CD4-positive, alpha-beta memory T cell (primary cell): ENCODE measurements at regions of chr11 and their contacts with region 1.

Region 1: DNA sequence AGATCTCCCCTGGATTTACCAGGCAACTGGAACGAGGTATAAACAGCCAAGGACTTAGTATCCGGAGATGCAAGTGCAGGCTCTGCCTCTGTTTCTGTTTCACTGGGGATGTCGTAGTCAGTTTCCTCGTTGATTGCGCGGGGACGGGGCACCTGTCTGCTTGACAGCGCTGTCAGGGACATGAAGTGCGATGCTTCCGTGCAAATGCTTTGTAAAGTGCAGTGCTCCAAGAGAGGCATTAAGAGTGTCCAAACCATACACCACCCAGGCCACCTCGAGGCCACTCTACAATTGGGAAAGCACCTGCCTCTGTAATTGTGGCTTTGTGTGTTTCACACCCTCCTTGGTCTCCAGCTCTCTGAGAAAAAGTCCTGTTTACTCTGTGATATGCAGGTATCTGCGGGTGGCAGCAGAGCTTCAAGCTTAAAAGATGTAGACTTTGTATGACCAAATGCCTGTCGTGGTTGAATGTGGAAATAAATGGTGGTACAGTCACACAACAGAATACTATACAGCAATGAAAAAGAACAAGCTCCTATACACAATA is 18.6 kb upstream of the CD5 start:
- DNase-seq: peak; percentile 80 to 91 (median 82)
- H3K4me3 ChIP-seq: peak overlapping the region in 1 of 2 donors; percentile 19
- H3K4me3 Mint-ChIP-seq: peak overlapping the region; percentile 75 to 90 (median 86)
- H3K27ac ChIP-seq: peak overlapping the region; percentile 91
- H3K27ac Mint-ChIP-seq: peak overlapping the region; percentile 94 to 100 (median 99)
- H3K4me1 ChIP-seq: peaks cover 55% of the 10 kb centered on the region
- H3K4me1 Mint-ChIP-seq: peaks cover 42 to 65% (median 50%) of the 10 kb centered on the region in 4 donors
- H3K27me3 ChIP-seq: no peaks in the 10 kb centered on the region
- H3K27me3 Mint-ChIP-seq: no peaks in the 10 kb centered on the region

Region 2: GRCh38 chr11:60970369-60970774 is 113.3 kb before region 1 on chr11:
- CTCF ChIA-PET with region 1: interaction called, 4 read pairs
- POLR2A ChIA-PET with region 1: interaction called, 3 read pairs
- intact Hi-C with region 1: loop called (anchors 2 kb)
- DNase-seq: peak; percentile 78 to 82 (median 80)
- H3K4me3 ChIP-seq: peak overlapping the region; percentile 38 to 92
- H3K4me3 Mint-ChIP-seq: peak overlapping the region; percentile 93 to 98 (median 96)
- H3K27ac ChIP-seq: peak overlapping the region; percentile 92
- H3K27ac Mint-ChIP-seq: peak overlapping the region; percentile 88 to 98 (median 96)
- H3K4me1 ChIP-seq: peaks cover 23% of the 10 kb centered on the region
- H3K4me1 Mint-ChIP-seq: peaks cover 18 to 38% (median 24%) of the 10 kb centered on the region in 4 donors
- H3K27me3 ChIP-seq: no peaks in the 10 kb centered on the region
- H3K27me3 Mint-ChIP-seq: peaks cover 0 to 1% of the 10 kb centered on the region in 2 donors

Region 3: DNA sequence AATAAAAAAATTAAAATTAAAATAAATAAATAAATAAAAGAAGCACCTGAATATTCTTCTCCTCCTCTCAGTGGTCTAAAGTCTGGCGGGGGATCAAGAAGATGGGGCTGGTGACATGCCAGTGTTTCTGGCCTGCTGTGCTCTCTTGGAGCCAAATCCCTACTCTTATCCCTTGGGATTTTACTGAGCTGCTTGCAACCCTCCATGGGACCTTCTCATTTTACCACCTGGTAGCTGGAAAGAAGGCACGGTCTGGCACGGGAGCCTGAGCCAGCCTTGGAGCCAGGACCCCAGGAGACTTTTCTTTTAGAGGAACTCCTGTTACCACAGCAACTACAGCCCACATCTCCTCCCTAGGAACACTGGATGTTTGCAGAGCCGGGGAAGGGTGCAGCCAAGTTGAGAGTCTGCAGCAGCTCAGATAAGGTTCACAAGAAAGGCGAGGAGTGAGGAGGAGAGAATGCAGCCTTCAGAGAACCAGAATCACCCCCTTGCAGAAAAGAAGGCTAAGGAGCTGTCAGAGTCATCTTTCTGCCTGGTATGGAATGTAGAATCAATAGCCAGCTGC is 90.7 kb before region 1 on chr11:
- CTCF ChIA-PET with region 1: no interaction called
- POLR2A ChIA-PET with region 1: interaction called, 157 read pairs
- intact Hi-C with region 1: no loop called
- DNase-seq: peak in 1 of 5 donors; percentile 7
- H3K4me3 ChIP-seq: no peak overlapping the region
- H3K4me3 Mint-ChIP-seq: peak overlapping the region; percentile 34 to 81 (median 78)
- H3K27ac ChIP-seq: peak overlapping the region; percentile 51
- H3K27ac Mint-ChIP-seq: peak overlapping the region; percentile 84 to 96 (median 94)
- H3K4me1 ChIP-seq: peaks cover 92% of the 10 kb centered on the region
- H3K4me1 Mint-ChIP-seq: peaks cover 53 to 86% (median 72%) of the 10 kb centered on the region in 4 donors
- H3K27me3 ChIP-seq: no peaks in the 10 kb centered on the region
- H3K27me3 Mint-ChIP-seq: no peaks in the 10 kb centered on the region

Region 4: DNA sequence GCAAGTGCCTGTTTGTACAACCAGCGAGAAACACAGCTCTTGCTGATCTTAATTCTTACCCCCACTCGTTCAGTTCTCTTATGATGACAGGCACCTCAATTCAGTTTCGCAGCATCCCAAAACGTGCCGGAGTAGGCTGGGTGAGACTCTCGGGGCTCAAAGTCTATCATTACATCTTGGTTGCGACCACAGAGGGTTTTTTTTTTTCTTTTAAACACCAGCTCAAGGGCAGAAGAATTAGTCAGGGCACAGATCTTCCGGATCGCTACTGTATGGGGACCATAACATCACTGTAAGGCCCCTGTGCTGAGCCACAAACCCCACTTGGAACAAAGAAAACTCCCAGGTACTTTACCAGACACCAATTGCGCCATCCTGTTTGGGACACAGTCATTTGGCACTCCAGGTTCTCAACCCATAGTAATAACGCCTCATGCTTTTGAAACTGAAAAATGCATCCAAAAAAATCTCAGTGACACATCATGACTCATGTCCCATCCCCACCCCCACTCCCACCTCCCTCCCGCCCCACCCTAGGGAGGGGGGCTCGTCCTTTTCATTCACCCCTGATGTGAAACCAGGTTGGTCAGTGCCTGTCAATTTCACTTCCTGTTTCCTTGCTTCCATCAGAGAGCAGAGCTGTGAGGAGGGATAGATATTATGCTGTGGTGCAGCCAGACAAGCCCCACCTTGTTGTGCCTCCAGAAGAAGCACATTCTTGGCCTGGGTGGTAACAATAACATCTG is 22.4 kb before region 1 on chr11:
- CTCF ChIA-PET with region 1: interaction called, 6 read pairs
- POLR2A ChIA-PET with region 1: interaction called, 1,022 read pairs
- intact Hi-C with region 1: loop called (anchors 2 kb)
- DNase-seq: peak; percentile 60 to 97 (median 65)
- H3K4me3 ChIP-seq: peak overlapping the region; percentile 17 to 48
- H3K4me3 Mint-ChIP-seq: peak overlapping the region; percentile 72 to 93 (median 86)
- H3K27ac ChIP-seq: peak overlapping the region; percentile 69
- H3K27ac Mint-ChIP-seq: peak overlapping the region; percentile 94 to 99 (median 97)
- H3K4me1 ChIP-seq: peaks cover 75% of the 10 kb centered on the region
- H3K4me1 Mint-ChIP-seq: peaks cover 59 to 91% (median 66%) of the 10 kb centered on the region in 4 donors
- H3K27me3 ChIP-seq: no peaks in the 10 kb centered on the region
- H3K27me3 Mint-ChIP-seq: no peaks in the 10 kb centered on the region

Region 5: DNA sequence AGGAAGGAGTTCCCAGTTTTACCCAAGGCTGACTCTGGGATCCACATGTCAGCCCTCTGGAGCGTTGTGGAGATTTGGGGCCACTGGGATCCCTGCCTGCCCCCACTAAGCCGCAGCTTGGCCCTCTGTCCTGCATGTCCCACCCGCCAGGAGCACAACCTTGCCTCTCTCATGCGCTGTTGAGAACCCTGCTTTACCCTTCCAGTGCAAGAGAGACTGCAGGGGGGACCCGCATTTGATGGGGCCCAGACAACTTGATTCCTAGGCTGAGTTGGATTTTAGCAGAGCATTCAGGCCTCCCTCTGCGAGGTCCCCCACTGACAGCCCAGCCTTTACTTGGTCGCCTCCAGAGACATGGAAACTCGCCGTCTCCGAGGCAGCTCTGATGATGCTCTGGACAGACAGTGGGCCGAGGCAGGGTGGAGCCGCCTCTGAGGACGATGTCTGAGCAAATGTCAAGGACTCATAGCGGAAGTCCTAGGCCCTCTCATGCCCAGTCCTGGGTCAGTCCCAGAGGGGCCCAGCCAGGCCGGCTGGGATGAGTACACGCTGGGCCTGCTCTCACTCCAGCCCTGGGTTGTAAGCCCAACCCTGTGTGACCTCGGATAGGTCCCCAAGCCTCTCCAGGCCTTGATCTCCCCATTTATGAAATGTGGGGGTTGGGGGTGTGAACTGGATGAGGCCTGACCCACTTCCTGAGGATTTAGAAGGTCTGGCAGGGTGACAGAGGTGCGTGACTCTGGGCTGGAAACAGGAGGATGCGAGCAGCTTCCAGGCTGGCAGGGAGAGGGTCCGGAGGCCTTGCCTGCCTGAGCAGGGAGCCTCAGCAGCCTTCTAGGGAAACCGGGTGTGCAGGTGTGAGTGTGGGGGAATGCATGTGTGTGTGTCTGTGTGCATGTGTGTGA is 19.2 kb after region 1 on chr11:
- CTCF ChIA-PET with region 1: interaction called, 6 read pairs
- POLR2A ChIA-PET with region 1: interaction called, 107 read pairs
- intact Hi-C with region 1: loop called (anchors 2 kb)
- DNase-seq: peak; percentile 34 to 63 (median 47)
- H3K4me3 ChIP-seq: peak overlapping the region; percentile 99 to 100
- H3K4me3 Mint-ChIP-seq: no peak overlapping the region
- H3K27ac ChIP-seq: peak overlapping the region; percentile 100
- H3K27ac Mint-ChIP-seq: no peak overlapping the region
- H3K4me1 ChIP-seq: peaks cover 64% of the 10 kb centered on the region
- H3K4me1 Mint-ChIP-seq: peaks cover 0 to 47% (median 28%) of the 10 kb centered on the region in 4 donors
- H3K27me3 ChIP-seq: no peaks in the 10 kb centered on the region
- H3K27me3 Mint-ChIP-seq: no peaks in the 10 kb centered on the region

Region 6: GRCh38 chr11:61120706-61121191 is 37.1 kb after region 1 on chr11:
- CTCF ChIA-PET with region 1: interaction called, 6 read pairs
- POLR2A ChIA-PET with region 1: interaction called, 173 read pairs
- intact Hi-C with region 1: no loop called
- DNase-seq: peak; percentile 74 to 85 (median 78)
- H3K4me3 ChIP-seq: peak overlapping the region in 1 of 2 donors; percentile 10
- H3K4me3 Mint-ChIP-seq: peak overlapping the region; percentile 65 to 83 (median 77)
- H3K27ac ChIP-seq: peak overlapping the region; percentile 70
- H3K27ac Mint-ChIP-seq: peak overlapping the region; percentile 95 to 99 (median 98)
- H3K4me1 ChIP-seq: peaks cover 63% of the 10 kb centered on the region
- H3K4me1 Mint-ChIP-seq: peaks cover 41 to 56% (median 50%) of the 10 kb centered on the region in 4 donors
- H3K27me3 ChIP-seq: no peaks in the 10 kb centered on the region
- H3K27me3 Mint-ChIP-seq: no peaks in the 10 kb centered on the region

Region 7: GRCh38 chr11:61266602-61267001 is 182.9 kb after region 1 on chr11:
- CTCF ChIA-PET with region 1: no interaction called
- POLR2A ChIA-PET with region 1: no interaction called
- intact Hi-C with region 1: no loop called
- DNase-seq: no peak
- H3K4me3 ChIP-seq: no peak overlapping the region
- H3K4me3 Mint-ChIP-seq: no peak overlapping the region
- H3K27ac ChIP-seq: no peak overlapping the region
- H3K27ac Mint-ChIP-seq: no peak overlapping the region
- H3K4me1 ChIP-seq: no peaks in the 10 kb centered on the region
- H3K4me1 Mint-ChIP-seq: no peaks in the 10 kb centered on the region
- H3K27me3 ChIP-seq: no peaks in the 10 kb centered on the region
- H3K27me3 Mint-ChIP-seq: peaks cover 0 to 3% of the 10 kb centered on the region in 2 donors

Region 8: GRCh38 chr11:61532139-61533038 is 448.7 kb after region 1 on chr11:
- CTCF ChIA-PET with region 1: no interaction called
- POLR2A ChIA-PET with region 1: no interaction called
- intact Hi-C with region 1: no loop called
- DNase-seq: peak in 4 of 5 donors; percentile 32 to 39 (median 34)
- H3K4me3 ChIP-seq: no peak overlapping the region
- H3K4me3 Mint-ChIP-seq: no peak overlapping the region
- H3K27ac ChIP-seq: no peak overlapping the region
- H3K27ac Mint-ChIP-seq: no peak overlapping the region
- H3K4me1 ChIP-seq: no peaks in the 10 kb centered on the region
- H3K4me1 Mint-ChIP-seq: peaks cover 0 to 1% (median 0%) of the 10 kb centered on the region in 4 donors
- H3K27me3 ChIP-seq: no peaks in the 10 kb centered on the region
- H3K27me3 Mint-ChIP-seq: peaks cover 7 to 26% of the 10 kb centered on the region in 2 donors